ENCODE measurements at regions of chr17 and their contacts with region 1.

Region 1: GRCh38 chr17:78250891-78251794 is 19.7 kb downstream of the TMEM235 start:
- DNase-seq: peak; percentile 90
- H3K4me3 Mint-ChIP-seq: peak overlapping the region; percentile 83
- H3K27ac Mint-ChIP-seq: peak overlapping the region; percentile 95
- H3K4me1 Mint-ChIP-seq: peaks cover 50% of the 10 kb centered on the region
- H3K27me3 Mint-ChIP-seq: peaks cover 28% of the 10 kb centered on the region

Region 2: DNA sequence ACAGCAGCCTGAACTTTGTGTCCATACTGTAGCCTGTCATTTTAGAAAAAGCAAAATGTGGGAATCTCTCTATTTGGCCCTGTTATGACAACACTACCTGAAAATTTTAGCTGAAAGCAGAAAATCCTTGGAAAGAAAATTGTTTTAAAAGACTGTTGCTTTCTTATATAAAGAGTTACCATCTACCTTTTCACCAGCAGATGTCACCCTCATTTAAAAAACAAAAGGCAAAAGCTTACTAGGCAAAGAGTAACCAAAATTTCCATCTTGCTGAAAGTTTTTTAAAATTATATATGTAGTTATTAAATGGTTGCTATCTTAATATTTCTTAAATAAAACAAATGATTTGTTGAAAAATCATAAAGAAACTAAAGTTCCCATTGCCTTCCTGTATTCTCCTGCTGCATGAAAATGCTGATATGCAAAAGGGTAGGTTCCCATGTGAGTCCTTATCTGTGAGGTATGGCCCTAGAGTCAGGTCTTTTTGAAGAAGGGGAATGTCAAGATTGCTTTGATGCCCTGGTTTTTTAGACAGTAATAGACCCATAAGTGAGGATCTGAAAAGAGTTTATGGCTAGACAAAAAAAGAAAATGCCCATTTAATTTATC is 231.7 kb before region 1 on chr17:
- CTCF ChIA-PET with region 1: interaction called, 10 read pairs
- DNase-seq: no peak
- H3K4me3 Mint-ChIP-seq: peak overlapping the region; percentile 58
- H3K27ac Mint-ChIP-seq: peak overlapping the region; percentile 94
- H3K4me1 Mint-ChIP-seq: peaks cover 37% of the 10 kb centered on the region
- H3K27me3 Mint-ChIP-seq: no peaks in the 10 kb centered on the region

Region 3: GRCh38 chr17:78133971-78134898 is 116.9 kb before region 1 on chr17:
- CTCF ChIA-PET with region 1: no interaction called
- DNase-seq: peak; percentile 93
- H3K4me3 Mint-ChIP-seq: peak overlapping the region; percentile 79
- H3K27ac Mint-ChIP-seq: peak overlapping the region; percentile 85
- H3K4me1 Mint-ChIP-seq: peaks cover 68% of the 10 kb centered on the region
- H3K27me3 Mint-ChIP-seq: peaks cover 4% of the 10 kb centered on the region

Region 4: GRCh38 chr17:78237401-78238012 is 13.6 kb before region 1 on chr17:
- CTCF ChIA-PET with region 1: interaction called, 14 read pairs
- DNase-seq: no peak
- H3K4me3 Mint-ChIP-seq: no peak overlapping the region
- H3K27ac Mint-ChIP-seq: no peak overlapping the region
- H3K4me1 Mint-ChIP-seq: peaks cover 2% of the 10 kb centered on the region
- H3K27me3 Mint-ChIP-seq: peaks cover 52% of the 10 kb centered on the region

Region 5: DNA sequence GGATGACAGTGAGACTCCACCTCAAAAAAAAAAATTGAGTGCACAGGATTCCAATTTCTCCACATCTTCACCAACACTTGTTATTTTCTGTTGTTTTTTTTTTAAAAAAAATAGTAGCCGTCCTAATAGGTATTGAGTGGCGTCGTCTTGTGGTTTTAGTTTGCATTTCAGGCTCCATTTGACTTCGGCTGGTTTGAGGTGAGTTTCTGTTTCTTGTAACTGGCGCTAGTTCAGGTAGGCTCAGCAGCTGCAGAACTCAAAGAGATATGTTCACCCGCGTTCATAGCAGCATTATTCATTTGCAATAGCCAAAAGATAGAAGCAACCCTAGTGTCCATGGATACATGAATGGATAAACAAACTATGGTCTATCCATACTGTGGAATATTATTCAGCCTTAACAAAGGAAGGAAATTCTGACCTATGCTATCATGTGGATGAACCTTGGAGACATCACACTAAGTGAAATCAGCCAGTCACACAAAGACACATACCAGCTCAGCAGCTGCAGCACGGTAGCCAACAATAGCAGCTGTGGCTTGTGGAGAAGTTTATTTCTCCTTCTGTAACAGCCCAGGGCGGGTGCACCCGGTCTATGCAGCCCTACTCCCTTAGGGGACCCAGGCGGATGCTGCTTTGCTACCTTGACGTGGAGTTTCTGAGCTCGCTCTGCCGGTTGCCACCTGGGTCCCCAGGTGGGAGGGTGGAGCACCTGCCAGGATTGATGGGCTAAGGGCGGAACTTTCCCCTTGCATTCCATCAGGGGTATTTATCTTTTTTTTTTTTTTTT is 25.1 kb after region 1 on chr17:
- CTCF ChIA-PET with region 1: interaction called, 14 read pairs
- DNase-seq: peak; percentile 50
- H3K4me3 Mint-ChIP-seq: peak overlapping the region; percentile 15
- H3K27ac Mint-ChIP-seq: peak overlapping the region; percentile 93
- H3K4me1 Mint-ChIP-seq: peaks cover 66% of the 10 kb centered on the region
- H3K27me3 Mint-ChIP-seq: peaks cover 12% of the 10 kb centered on the region

Region 6: GRCh38 chr17:78421484-78422266 is 170.5 kb after region 1 on chr17:
- CTCF ChIA-PET with region 1: interaction called, 20 read pairs
- DNase-seq: peak; percentile 81
- H3K4me3 Mint-ChIP-seq: no peak overlapping the region
- H3K27ac Mint-ChIP-seq: peak overlapping the region; percentile 67
- H3K4me1 Mint-ChIP-seq: peaks cover 58% of the 10 kb centered on the region
- H3K27me3 Mint-ChIP-seq: no peaks in the 10 kb centered on the region

Measured in activated naive CD4-positive, alpha-beta T cell treated with anti-CD3 and anti-CD28 coated beads, Interleukin-2, amount 10 ng/mL, durations not matched to agents 7 days and 5 days (primary cell).